ENCODE measurements at regions of chr14 and their contacts with region 1.

Region 1: GRCh38 chr14:65222440-65222858 is 120.1 kb upstream of the MAX start:
- DNase-seq: peak; percentile 78
- H3K4me3 Mint-ChIP-seq: no peak overlapping the region
- H3K27ac Mint-ChIP-seq: peak overlapping the region; percentile 45
- H3K4me1 Mint-ChIP-seq: peaks cover 33% of the 10 kb centered on the region
- H3K27me3 Mint-ChIP-seq: no peaks in the 10 kb centered on the region

Region 2: DNA sequence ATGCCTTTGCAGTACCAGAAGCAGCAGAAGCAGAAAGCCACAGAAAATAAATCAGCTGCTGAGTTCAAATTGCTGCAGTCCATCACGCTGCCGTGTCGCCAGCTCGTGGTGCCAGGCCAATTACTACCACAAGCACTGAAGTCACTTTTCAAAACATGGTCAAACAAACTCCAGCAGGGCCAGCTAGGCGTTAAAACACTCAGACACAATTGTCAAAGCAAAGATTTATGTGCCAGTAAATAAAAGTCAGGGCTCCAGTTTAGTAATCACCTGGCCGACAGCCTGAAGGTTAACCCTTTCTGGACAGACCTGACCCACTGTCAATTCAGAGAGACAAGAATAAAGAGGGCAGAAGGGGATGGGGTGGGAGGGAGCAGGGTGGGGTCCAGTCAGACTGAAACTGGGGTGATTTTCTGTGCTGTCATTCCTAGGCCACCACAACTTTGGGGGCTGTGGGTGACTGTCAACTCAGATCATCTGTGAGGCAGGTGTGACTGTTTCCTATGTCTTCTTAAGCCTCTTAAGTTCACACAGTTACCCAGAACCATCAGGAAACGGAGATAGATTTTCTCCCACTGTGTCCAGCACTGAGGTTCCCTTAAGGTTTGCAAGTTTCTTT is 80.2 kb after region 1 on chr14:
- CTCF ChIA-PET with region 1: interaction called, 3 read pairs
- POLR2A ChIA-PET with region 1: no interaction called
- intact Hi-C with region 1: loop called (anchors 5 kb)
- DNase-seq: peak; percentile 87
- H3K4me3 Mint-ChIP-seq: peak overlapping the region; percentile 40
- H3K27ac Mint-ChIP-seq: peak overlapping the region; percentile 87
- H3K4me1 Mint-ChIP-seq: peaks cover 45% of the 10 kb centered on the region
- H3K27me3 Mint-ChIP-seq: no peaks in the 10 kb centered on the region

Measured in activated CD4-positive, alpha-beta memory T cell treated with anti-CD3 and anti-CD28 coated beads for 36 hours (primary cell).